Calu3 (cell line): ENCODE measurements at regions of chr6 and their contacts with region 1.

Region 1: GRCh38 chr6:25404693-25405169 is 125.6 kb downstream of the CARMIL1 start:
- DNase-seq: peak; percentile 13
- H3K4me3 Mint-ChIP-seq: peak overlapping the region; percentile 49
- H3K27ac Mint-ChIP-seq: peak overlapping the region; percentile 49
- H3K4me1 Mint-ChIP-seq: no peaks in the 10 kb centered on the region
- H3K27me3 Mint-ChIP-seq: no peaks in the 10 kb centered on the region
- CTCF ChIP-seq: no peak

Region 2: DNA sequence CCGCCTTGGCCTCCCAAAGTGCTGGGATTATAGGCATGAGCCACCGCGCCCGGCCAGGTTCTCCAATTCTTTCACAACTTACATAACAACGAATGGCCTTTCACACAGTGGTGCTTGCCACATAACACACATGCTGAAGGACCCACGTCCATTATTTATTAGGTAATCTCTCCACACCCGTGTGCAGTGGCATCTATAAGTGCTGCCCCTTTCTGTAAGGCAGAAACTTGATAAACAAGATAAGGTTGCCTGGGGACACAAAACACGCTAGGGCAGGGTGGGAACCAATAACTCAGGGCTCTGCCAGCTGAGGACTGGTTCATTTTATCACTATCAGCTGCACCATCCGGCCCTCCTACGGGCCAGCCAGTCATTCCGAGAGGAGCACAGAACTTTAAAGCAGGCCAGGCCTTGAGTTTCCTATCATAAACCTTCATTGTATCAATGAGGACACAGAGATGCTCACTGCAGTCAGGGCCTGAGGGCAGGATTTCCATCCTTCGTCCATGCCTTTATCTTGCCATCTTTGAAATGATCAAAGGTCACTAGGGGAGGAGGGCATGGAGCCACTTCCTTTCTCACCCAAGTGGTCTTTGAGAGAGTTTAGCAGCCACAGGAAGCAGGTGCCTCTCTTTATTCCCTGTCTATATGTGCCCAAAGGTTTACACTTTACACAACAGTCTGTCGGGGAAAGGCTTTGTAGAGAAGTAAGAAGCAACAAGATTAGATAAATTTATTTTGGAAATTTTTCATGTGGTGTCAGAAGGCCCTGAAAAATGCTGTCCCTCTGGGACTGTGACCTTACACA is 952.9 kb before region 1 on chr6:
- CTCF ChIA-PET with region 1: no interaction called
- intact Hi-C with region 1: no loop called
- DNase-seq: peak; percentile 11
- H3K4me3 Mint-ChIP-seq: no peak overlapping the region
- H3K27ac Mint-ChIP-seq: no peak overlapping the region
- H3K4me1 Mint-ChIP-seq: no peaks in the 10 kb centered on the region
- H3K27me3 Mint-ChIP-seq: no peaks in the 10 kb centered on the region
- CTCF ChIP-seq: no peak

Region 3: GRCh38 chr6:25359191-25359861 is 45.4 kb before region 1 on chr6:
- CTCF ChIA-PET with region 1: interaction called, 3 read pairs
- intact Hi-C with region 1: loop called (anchors 2 kb)
- DNase-seq: peak; percentile 31
- H3K4me3 Mint-ChIP-seq: peak overlapping the region; percentile 48
- H3K27ac Mint-ChIP-seq: peak overlapping the region; percentile 71
- H3K4me1 Mint-ChIP-seq: peaks cover 57% of the 10 kb centered on the region
- H3K27me3 Mint-ChIP-seq: no peaks in the 10 kb centered on the region
- CTCF ChIP-seq: no peak